ENCODE measurements at regions of chr17 and their contacts with region 1.

Region 1: DNA sequence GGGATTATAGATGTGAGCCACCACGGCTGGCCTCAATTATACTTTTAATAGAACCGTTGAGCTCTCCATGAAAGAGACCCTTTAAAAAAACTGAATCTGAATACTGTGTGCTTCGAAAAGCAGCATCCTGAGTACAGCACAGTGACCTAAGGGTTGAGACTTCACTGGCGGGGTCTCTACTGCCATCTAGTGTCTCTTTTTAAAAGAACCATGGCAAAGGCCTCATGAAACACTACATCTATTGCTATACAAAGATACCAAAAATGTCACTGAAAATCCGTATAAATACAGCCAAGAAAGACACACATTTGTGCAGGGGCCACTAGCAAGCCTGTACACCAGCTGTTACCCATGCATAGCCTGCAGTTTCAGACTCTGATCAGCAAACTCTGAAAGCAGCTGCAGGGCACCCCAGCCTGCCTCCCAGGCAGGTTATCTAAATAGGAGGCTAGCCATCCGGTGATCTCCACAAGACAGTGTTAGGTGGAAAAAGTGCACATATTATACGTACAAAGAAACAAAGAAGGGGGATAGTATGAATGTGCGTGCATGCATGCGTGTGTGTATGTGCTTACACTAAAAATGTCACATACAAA is 35.3 kb downstream of the NPLOC4 start:
- DNase-seq: no peak
- H3K4me3 ChIP-seq: no peak overlapping the region
- H3K27ac ChIP-seq: no peak overlapping the region
- H3K4me1 ChIP-seq: peaks cover 0 to 24% (median 21%) of the 10 kb centered on the region in 4 donors
- H3K27me3 ChIP-seq: no peaks in the 10 kb centered on the region
- CTCF ChIP-seq: peak in 3 of 4 experiments; percentile 46 to 77 (median 53)
- EP300 ChIP-seq: no peak
- POLR2A ChIP-seq: no peak

Region 2: DNA sequence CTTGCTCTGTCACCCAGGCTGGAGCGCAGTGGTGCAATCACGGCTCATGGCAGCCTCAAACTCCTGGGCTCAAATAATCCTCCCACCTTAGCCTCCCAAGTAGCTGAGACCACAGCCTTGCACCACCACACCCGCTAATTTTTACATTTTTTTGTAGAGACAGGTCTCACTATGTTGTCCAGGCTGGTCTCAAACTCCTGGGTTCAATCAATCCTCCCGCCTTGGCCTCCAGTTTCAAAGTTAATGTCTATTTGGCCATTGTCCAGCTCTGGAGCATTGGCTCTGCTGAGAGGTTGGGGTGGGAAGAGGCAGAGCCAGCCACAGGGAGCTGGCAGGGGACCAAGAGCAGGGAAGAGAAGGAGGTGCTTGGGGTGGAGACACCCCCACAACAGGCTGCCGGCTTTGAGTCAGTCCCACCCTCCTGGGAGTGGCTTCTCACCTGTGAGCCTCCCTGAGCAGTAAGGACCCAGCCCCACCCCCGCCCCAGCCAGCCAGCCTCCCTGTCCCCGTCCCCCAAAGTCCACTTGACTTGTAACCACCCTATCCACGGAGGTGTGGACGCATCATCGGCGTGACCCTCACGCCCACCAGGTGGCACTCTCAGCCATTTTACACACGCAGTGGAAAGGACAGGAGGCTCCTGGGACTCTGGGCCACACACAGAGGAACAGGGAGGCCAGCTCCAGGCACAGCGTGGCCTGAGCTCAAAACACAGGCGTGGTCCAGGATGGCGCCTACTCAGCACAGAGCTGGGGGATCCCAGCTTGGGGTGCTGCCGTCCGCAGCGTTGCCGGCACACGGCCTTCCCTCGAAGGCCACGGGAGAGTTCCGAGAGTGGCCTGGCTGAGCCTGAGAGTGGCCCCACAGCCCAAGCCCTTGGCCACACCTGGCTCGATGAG is 459.1 kb before region 1 on chr17:
- intact Hi-C with region 1: loop called (anchors 10 kb)
- DNase-seq: peak; percentile 85
- H3K4me3 ChIP-seq: no peak overlapping the region
- H3K27ac ChIP-seq: no peak overlapping the region
- H3K4me1 ChIP-seq: peaks cover 0 to 9% (median 9%) of the 10 kb centered on the region in 4 donors
- H3K27me3 ChIP-seq: no peaks in the 10 kb centered on the region
- CTCF ChIP-seq: peak; percentile 12 to 63 (median 32)
- EP300 ChIP-seq: no peak
- POLR2A ChIP-seq: no peak

Region 3: DNA sequence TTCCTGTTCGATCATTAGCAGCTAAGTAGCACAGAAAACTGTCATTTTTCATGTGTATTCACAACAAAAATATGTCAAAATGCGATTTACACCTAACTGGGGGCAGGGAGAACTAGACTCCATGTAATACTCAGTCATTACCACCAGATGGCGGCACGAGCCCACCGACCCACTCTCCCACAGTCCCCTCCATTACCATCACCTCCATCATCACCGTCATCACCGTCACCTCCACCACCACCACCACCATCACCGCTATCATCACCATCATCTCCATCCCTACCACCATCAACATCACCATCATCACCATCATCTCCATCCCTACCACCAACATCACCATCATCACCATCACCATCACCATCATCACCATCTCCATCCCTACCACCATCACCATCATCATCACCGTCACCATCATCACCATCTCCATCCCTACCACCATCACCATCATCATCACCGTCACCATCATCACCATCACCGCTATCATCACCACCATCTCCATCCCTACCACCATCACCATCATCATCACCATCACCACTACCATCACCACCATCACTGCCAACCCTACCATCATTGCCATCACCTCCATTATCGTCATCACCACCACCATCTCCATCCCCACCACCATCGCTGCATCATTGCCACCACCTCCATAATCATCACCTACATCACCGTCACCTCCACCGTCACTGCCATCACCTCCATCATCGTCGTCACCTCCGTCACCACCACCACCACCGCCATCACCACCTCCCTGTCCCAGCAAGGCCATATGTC is 348.1 kb before region 1 on chr17:
- intact Hi-C with region 1: loop called (anchors 1 kb)
- DNase-seq: no peak
- H3K4me3 ChIP-seq: no peak overlapping the region
- H3K27ac ChIP-seq: peak overlapping the region in 1 of 4 donors; percentile 85
- H3K4me1 ChIP-seq: peaks cover 0 to 19% (median 18%) of the 10 kb centered on the region in 4 donors
- H3K27me3 ChIP-seq: no peaks in the 10 kb centered on the region
- CTCF ChIP-seq: peak; percentile 87 to 94 (median 90)
- EP300 ChIP-seq: no peak
- POLR2A ChIP-seq: no peak

Region 4: DNA sequence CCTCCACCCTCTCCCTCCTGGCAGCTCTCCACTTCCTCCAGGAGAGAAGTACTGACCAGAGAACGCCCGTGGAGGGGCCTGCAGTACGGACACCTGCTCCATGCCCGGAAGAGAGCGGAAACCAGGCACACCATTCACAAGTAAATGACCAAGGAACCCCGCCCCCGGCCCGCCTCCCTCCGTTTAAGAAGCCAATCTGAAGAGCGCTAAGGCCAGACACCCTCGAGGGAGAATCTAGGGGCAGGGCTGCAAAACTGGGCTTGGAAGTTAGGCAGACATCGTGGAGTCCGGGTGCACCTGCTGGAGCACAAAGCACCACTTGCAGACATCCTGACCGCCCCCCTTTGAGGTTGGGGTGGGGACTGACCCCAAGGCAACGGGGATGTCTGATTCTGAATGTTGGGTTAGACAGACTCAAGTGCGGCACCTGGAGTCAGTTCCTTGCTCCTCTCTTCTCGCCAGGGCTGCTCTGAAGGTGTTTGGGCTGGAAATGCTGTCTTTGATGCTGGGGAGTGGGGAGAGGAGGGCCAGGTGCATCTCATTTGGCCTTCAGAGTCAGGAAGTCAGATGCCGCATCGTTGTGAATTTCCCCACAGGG is 48.5 kb before region 1 on chr17:
- intact Hi-C with region 1: loop called (anchors 5 kb)
- DNase-seq: peak; percentile 81
- H3K4me3 ChIP-seq: peak overlapping the region; percentile 73 to 90 (median 81)
- H3K27ac ChIP-seq: peak overlapping the region; percentile 84 to 89 (median 85)
- H3K4me1 ChIP-seq: peaks cover 0 to 39% (median 26%) of the 10 kb centered on the region in 4 donors
- H3K27me3 ChIP-seq: no peaks in the 10 kb centered on the region
- CTCF ChIP-seq: no peak
- EP300 ChIP-seq: no peak
- POLR2A ChIP-seq: no peak

Region 5: DNA sequence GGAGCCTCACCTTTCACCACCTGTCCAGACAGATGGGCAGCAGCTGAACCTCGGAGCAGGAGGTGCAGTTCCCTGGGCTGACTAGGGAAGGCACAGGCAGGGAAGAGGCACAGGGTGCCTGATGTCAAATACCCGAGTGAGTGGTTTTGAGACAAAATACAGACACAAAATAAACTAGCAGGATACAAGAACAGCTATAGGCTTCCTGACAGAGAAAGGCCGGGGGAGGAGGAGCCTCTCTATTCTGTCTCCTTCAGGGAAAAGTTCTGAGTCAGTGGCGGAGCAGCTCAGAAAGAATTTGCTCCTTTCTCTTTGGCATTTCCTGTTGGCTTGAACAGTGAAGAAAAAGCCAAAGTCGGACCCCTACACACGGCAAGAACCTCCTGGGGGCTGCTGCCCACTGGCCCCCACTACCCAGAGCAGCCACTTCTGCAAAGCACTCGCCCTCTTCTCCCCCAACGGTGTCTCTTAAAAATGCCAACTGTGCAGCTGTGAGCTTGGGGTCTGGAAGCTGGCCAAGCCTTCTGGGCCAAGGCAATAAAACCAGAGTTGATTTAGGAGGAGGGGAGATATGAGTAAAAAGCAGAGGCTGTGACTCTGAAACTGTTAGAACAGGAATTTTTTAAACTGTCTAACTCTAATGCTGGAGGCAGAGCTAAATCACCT is 35.0 kb before region 1 on chr17:
- intact Hi-C with region 1: loop called (anchors 5 kb)
- DNase-seq: peak; percentile 90
- H3K4me3 ChIP-seq: peak overlapping the region in 3 of 4 donors; percentile 22 to 33 (median 23)
- H3K27ac ChIP-seq: peak overlapping the region; percentile 76 to 86 (median 84)
- H3K4me1 ChIP-seq: peaks cover 0 to 50% (median 40%) of the 10 kb centered on the region in 4 donors
- H3K27me3 ChIP-seq: no peaks in the 10 kb centered on the region
- CTCF ChIP-seq: no peak
- EP300 ChIP-seq: no peak
- POLR2A ChIP-seq: no peak

Measured in sigmoid colon (tissue), 7 donors.